Calu3 (cell line): ENCODE measurements at regions of chr6 and their contacts with region 1.

Region 1: DNA sequence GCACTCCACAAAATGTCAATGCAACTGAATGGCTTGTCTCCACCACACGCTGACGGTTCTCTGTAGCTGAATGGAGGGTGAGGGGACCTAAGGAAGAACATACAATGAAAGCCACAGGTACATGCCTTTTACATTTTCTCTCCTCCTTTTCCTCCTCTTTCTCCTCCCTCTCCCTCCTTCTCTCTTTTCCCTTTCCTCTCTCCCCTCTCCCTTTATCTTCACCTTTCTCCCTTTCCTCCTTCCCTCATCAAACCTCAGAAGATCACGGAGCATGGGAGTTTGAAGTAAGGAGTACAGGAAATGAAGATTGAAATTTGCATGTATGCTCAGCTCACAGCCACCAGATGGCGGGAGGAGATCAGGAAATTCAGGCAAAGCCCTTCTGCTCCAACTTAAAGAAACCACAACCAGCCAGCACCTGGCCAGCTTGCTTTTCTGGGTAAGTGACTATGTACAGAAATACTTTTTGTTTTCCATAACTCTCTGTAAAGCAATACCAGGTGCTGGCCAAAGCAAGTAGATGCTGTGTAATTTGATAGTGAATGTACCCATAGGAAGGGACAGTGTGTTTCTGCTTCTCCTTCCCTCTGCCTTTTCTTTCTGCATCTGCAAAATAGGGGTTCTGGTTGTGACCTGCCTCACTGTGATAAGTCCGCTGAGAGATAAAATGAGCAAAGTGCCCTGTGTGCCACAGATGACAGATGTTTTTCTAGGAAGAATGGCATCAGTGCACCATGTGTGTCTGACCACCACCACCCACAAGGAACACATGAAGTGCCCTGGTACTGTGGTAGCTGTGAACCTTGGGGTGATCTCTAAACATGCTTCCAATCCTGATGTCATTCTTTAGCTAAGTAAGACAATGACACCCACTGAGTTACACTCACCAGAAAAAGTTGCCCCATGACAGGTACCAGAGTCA is 18.6 kb upstream of the FOXO3 start:
- DNase-seq: peak; percentile 76
- H3K4me3 Mint-ChIP-seq: peak overlapping the region; percentile 59
- H3K27ac Mint-ChIP-seq: peak overlapping the region; percentile 5
- H3K4me1 Mint-ChIP-seq: no peaks in the 10 kb centered on the region
- H3K27me3 Mint-ChIP-seq: no peaks in the 10 kb centered on the region
- CTCF ChIP-seq: peak; percentile 74

Region 2: DNA sequence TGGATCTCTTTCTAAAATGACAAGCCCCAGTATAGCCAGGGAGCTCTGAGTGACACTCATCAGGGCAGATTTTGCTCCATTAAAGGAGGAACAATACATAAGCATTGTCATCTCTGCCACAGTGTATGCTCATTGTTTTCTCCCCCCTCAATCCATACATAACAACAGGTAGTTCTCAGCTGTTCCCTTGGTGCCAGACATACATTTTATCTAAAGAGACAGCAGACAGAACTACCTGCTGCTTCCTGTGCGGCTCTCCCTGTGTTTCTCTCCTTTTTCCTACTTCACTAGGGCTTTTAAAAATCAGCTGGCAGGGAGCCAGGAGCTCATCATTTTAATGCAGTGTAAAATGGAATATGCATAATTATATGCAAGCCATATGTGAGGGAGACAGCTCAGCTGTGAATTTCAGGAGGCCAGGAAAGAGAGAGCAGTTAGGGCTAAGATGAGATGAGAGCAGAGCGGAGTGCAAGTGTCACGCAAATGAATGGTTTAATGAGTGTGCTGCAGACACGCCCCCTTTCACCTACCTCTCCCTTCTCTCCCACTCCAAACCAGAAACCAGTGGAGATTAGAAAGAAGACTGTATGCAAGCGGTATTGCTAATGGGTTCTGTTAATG is 956.2 kb before region 1 on chr6:
- CTCF ChIA-PET with region 1: no interaction called
- intact Hi-C with region 1: no loop called
- DNase-seq: no peak
- H3K4me3 Mint-ChIP-seq: no peak overlapping the region
- H3K27ac Mint-ChIP-seq: no peak overlapping the region
- H3K4me1 Mint-ChIP-seq: peaks cover 20% of the 10 kb centered on the region
- H3K27me3 Mint-ChIP-seq: peaks cover 7% of the 10 kb centered on the region
- CTCF ChIP-seq: no peak

Region 3: DNA sequence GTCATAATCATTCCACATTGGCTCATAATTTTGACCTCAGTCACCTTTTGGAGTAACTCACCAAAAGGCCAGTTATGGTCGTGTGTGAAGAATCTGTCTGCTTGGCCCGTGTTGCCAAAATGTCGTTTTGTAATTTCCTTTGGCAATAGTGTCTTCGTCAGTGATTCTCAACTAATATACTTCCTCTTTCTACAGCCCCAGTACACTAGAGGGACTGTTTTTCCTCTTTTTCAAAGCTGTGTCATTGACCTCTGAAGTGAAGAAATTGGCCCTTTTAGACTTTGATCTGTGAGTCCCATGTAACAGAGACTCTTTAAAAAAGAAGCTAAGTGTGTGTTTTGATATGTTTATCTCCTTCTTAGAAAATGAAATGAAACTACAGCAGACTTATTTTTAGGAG is 23.8 kb after region 1 on chr6:
- CTCF ChIA-PET with region 1: no interaction called
- intact Hi-C with region 1: no loop called
- DNase-seq: no peak
- H3K4me3 Mint-ChIP-seq: peak overlapping the region; percentile 94
- H3K27ac Mint-ChIP-seq: peak overlapping the region; percentile 70
- H3K4me1 Mint-ChIP-seq: peaks cover 37% of the 10 kb centered on the region
- H3K27me3 Mint-ChIP-seq: no peaks in the 10 kb centered on the region
- CTCF ChIP-seq: no peak

Region 4: DNA sequence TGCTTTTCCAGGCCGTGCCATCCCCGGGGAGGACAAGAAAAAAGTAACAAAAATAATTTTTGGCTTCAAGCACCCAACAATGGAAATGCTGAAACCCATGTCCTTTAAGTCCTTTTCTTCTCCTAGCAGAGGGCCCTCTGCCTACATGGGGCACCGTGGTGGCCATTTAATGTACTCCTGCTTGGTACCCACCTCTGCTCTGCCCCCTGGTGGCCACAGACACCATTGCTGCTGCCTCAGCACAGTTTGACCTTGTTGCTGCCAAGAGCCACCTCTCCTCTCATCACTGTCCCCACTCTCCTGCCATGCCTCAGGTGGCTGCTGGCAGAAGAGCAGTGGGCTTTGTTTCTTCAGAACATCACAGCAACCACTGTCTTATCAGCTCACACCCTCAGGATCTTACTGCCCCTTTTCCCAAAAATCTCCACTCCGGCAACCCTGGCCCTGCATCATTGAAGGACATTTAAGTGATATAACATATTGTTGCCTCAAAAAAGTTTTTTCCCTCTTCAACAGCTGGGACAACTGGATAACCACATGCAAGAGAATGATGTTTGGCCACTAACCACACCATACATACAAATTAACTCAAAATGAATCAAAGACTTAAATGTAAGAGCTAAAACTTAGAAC is 293.2 kb after region 1 on chr6:
- CTCF ChIA-PET with region 1: interaction called, 16 read pairs
- intact Hi-C with region 1: loop called (anchors 1 kb)
- DNase-seq: peak; percentile 87
- H3K4me3 Mint-ChIP-seq: no peak overlapping the region
- H3K27ac Mint-ChIP-seq: no peak overlapping the region
- H3K4me1 Mint-ChIP-seq: peaks cover 8% of the 10 kb centered on the region
- H3K27me3 Mint-ChIP-seq: no peaks in the 10 kb centered on the region
- CTCF ChIP-seq: peak; percentile 95

Region 5: GRCh38 chr6:108896111-108896661 is 354.1 kb after region 1 on chr6:
- CTCF ChIA-PET with region 1: interaction called, 46 read pairs
- intact Hi-C with region 1: loop called (anchors 1 kb)
- DNase-seq: no peak
- H3K4me3 Mint-ChIP-seq: no peak overlapping the region
- H3K27ac Mint-ChIP-seq: no peak overlapping the region
- H3K4me1 Mint-ChIP-seq: no peaks in the 10 kb centered on the region
- H3K27me3 Mint-ChIP-seq: no peaks in the 10 kb centered on the region
- CTCF ChIP-seq: no peak